ENCODE measurements at regions of chr14 and their contacts with region 1.

Region 1: GRCh38 chr14:75249251-75249957 is 29.2 kb upstream of the FOS start:
- DNase-seq: peak; percentile 96
- ATAC-seq: peak; percentile 79
- H3K4me3 Mint-ChIP-seq: peak overlapping the region; percentile 16
- H3K27ac Mint-ChIP-seq: peak overlapping the region; percentile 88
- H3K4me1 Mint-ChIP-seq: peaks cover 57% of the 10 kb centered on the region
- H3K27me3 Mint-ChIP-seq: peaks cover 4% of the 10 kb centered on the region
- CTCF ChIP-seq: no peak

Region 2: DNA sequence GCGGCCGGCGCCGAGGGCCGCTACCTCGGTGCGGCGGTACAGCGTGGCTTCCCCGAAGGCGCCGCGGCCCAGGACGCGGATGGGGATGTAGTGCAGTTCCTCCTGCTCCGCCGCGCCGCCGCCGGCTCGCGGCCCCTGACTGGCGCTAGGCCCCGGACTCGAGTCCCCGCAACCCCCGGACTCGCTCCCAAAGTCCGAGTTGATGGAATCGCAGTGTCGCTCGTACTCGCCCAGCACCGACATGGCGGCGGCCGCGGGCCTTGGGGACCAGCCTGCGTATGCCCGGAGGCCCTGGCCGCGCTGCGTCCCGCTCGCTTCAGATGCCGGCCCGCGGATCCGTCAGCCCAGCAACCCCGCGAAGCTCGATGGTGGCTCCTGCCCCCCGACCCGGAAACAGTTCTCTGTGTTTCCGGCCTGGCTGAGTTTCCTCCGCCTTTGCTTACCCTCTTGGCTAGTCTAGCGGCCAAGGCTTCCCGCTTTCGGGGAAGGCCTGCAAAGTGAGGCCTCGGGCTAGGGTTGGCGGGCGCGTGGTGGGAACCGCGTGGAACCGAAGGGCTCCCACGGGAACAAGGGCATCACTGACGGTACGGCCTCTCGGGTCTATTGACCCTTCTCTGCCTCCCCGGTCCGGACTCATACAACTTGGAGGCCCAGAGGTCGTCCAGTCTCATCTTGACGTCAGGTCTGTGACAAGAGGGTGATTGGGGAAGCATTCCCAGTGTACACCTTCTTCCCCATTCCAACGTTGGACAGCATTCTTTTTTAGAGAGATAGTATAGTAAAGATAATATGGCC is 122.5 kb before region 1 on chr14 and contains the start of gene NEK9:
- CTCF ChIA-PET with region 1: interaction called, 3 read pairs
- POLR2A ChIA-PET with region 1: interaction called, 6 read pairs
- intact Hi-C with region 1: loop called (anchors 5 kb)
- DNase-seq: peak; percentile 93
- ATAC-seq: peak; percentile 94
- H3K4me3 Mint-ChIP-seq: peak within 1 kb of the TSS; percentile 99
- H3K27ac Mint-ChIP-seq: peak within 1 kb of the TSS; percentile 99
- H3K4me1 Mint-ChIP-seq: peaks cover 39% of the 10 kb centered on the region
- H3K27me3 Mint-ChIP-seq: no peaks in the 10 kb centered on the region
- CTCF ChIP-seq: no peak
- total RNA-seq, gene NEK9: 54.9 to 59.5 TPM

Region 3: GRCh38 chr14:75283162-75283881 is 33.9 kb after region 1 on chr14:
- CTCF ChIA-PET with region 1: no interaction called
- POLR2A ChIA-PET with region 1: interaction called, 7 read pairs
- intact Hi-C with region 1: loop called (anchors 5 kb)
- DNase-seq: no peak
- ATAC-seq: no peak
- H3K4me3 Mint-ChIP-seq: no peak overlapping the region
- H3K27ac Mint-ChIP-seq: no peak overlapping the region
- H3K4me1 Mint-ChIP-seq: peaks cover 18% of the 10 kb centered on the region
- H3K27me3 Mint-ChIP-seq: peaks cover 14% of the 10 kb centered on the region
- CTCF ChIP-seq: no peak

Measured in activated CD8-positive, alpha-beta T cell treated with anti-CD3 and anti-CD28 coated beads for 36 hours (primary cell).